Natural killer cell (primary cell): ENCODE measurements at regions of chr18 and their contacts with region 1.

Region 1: GRCh38 chr18:2540575-2540974 is 30.7 kb downstream of the METTL4 start:
- DNase-seq: no peak
- ATAC-seq: no peak
- H3K4me3 ChIP-seq: no peak overlapping the region
- H3K4me3 Mint-ChIP-seq: no peak overlapping the region
- H3K27ac ChIP-seq: no peak overlapping the region
- H3K27ac Mint-ChIP-seq: no peak overlapping the region
- H3K4me1 ChIP-seq: no peaks in the 10 kb centered on the region
- H3K4me1 Mint-ChIP-seq: no peaks in the 10 kb centered on the region
- H3K27me3 ChIP-seq: no peaks in the 10 kb centered on the region
- H3K27me3 Mint-ChIP-seq: no peaks in the 10 kb centered on the region
- CTCF ChIP-seq: no peak

Region 2: DNA sequence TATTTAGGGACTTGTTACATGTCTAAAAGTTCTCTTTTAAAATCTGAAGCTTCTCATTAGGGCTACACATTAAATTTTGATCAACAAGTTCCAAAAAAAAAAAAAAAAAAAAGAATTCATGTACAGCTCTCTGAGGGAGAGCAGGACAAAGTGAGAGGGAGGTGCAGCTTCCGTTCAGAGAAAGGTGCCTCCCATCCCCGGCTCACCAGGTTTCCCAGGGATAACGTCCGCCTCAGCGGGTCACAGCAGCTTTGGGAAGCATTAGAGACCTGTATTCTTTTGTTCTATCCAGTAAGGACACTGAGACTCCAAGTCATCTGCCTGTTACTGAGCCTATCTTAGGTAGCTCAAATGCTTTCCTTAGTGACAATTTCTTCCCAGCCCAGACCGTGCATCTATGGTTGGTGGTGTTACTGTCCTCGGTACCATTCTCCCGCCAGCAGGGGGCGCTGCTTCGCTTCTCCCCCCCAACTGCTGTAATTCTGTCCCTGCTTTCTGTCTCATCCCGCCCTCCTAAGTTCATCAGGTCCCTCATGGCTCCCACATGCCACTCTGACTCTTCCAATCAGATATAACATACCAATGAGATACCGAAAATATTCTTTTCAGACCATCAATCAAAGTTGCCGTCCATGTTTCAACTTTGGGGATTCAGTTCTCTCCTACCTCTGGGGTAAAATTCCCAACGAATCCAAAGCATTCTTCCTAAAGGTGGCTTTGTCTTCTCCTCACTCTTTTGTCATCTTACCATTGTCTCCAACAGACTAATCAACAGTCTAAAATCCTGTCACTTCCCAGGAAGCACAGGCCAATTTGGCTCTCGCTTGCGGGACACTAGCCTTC is 435.7 kb before region 1 on chr18:
- intact Hi-C with region 1: loop called (anchors 5 kb)
- DNase-seq: peak; percentile 26 to 59
- ATAC-seq: peak; percentile 38 to 78 (median 66)
- H3K4me3 ChIP-seq: no peak overlapping the region
- H3K4me3 Mint-ChIP-seq: no peak overlapping the region
- H3K27ac ChIP-seq: no peak overlapping the region
- H3K27ac Mint-ChIP-seq: no peak overlapping the region
- H3K4me1 ChIP-seq: no peaks in the 10 kb centered on the region
- H3K4me1 Mint-ChIP-seq: no peaks in the 10 kb centered on the region
- H3K27me3 ChIP-seq: no peaks in the 10 kb centered on the region
- H3K27me3 Mint-ChIP-seq: no peaks in the 10 kb centered on the region
- CTCF ChIP-seq: peak; percentile 67

Region 3: GRCh38 chr18:2337552-2338141 is 202.9 kb before region 1 on chr18:
- intact Hi-C with region 1: loop called (anchors 5 kb)
- DNase-seq: peak in 1 of 2 donors; percentile 66
- ATAC-seq: no peak
- H3K4me3 ChIP-seq: no peak overlapping the region
- H3K4me3 Mint-ChIP-seq: no peak overlapping the region
- H3K27ac ChIP-seq: no peak overlapping the region
- H3K27ac Mint-ChIP-seq: no peak overlapping the region
- H3K4me1 ChIP-seq: no peaks in the 10 kb centered on the region
- H3K4me1 Mint-ChIP-seq: no peaks in the 10 kb centered on the region
- H3K27me3 ChIP-seq: no peaks in the 10 kb centered on the region
- H3K27me3 Mint-ChIP-seq: peaks cover 0 to 19% of the 10 kb centered on the region in 2 donors
- CTCF ChIP-seq: peak; percentile 37

Region 4: DNA sequence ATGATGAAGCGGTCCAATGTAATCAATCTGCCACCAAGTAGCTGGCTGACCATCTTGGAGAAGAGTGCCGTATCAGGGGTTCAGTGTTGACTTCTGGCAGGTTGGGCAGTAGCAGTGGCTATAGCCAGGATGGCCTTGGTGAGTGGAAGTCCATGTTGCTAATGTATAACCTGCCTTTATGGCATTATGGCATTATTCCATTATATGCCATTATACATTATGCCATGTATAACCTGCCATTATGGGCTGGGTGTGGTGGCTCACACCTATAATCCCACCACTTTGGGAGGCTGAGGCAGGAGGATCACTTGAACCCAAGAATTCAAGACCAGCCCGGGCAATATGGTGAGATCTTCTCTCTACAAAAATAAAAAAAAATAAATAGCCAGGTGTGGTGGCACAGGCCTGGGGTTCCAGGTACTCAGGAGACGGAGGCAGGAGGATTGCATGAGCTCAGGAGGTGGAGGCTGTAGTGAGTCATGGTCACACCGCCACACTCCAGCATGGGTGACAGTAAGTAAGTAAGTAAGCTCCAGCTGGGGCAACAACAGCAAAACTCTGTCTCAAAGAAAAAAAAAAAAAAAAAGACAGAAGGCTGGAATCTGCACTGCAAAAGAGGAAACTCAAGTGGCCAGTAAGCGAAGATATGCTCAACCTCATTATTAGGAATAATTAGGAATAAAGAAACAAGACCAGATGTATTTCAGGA is 281.8 kb after region 1 on chr18:
- intact Hi-C with region 1: no loop called
- DNase-seq: no peak
- ATAC-seq: no peak
- H3K4me3 ChIP-seq: no peak overlapping the region
- H3K4me3 Mint-ChIP-seq: no peak overlapping the region
- H3K27ac ChIP-seq: no peak overlapping the region
- H3K27ac Mint-ChIP-seq: no peak overlapping the region
- H3K4me1 ChIP-seq: no peaks in the 10 kb centered on the region
- H3K4me1 Mint-ChIP-seq: no peaks in the 10 kb centered on the region
- H3K27me3 ChIP-seq: no peaks in the 10 kb centered on the region
- H3K27me3 Mint-ChIP-seq: peaks cover 0 to 5% of the 10 kb centered on the region in 2 donors
- CTCF ChIP-seq: no peak